ENCODE measurements at regions of chr2 and their contacts with region 1.

Region 1: DNA sequence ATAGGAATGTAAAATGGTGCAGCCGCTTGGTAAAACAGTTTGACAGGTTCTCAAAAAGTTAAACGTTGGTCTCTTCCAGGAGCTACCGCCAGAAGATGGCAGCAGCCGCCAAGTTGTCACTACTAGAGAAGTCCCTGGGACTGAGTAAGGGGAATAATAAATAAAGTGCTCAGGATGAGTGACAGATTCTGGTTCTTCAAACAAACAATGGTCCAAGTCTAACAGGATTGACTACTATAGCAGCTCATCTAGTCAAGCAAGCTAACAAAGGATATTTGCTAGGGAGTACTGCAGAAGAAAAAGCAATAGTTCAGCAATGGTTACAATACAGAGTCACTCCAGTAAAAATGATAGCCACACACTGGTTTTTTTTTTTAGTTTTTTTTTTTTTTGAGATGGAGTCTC is 3.8 kb upstream of the ANAPC1 start:
- DNase-seq: peak; percentile 59
- CTCF ChIP-seq: peak; percentile 64

Region 2: DNA sequence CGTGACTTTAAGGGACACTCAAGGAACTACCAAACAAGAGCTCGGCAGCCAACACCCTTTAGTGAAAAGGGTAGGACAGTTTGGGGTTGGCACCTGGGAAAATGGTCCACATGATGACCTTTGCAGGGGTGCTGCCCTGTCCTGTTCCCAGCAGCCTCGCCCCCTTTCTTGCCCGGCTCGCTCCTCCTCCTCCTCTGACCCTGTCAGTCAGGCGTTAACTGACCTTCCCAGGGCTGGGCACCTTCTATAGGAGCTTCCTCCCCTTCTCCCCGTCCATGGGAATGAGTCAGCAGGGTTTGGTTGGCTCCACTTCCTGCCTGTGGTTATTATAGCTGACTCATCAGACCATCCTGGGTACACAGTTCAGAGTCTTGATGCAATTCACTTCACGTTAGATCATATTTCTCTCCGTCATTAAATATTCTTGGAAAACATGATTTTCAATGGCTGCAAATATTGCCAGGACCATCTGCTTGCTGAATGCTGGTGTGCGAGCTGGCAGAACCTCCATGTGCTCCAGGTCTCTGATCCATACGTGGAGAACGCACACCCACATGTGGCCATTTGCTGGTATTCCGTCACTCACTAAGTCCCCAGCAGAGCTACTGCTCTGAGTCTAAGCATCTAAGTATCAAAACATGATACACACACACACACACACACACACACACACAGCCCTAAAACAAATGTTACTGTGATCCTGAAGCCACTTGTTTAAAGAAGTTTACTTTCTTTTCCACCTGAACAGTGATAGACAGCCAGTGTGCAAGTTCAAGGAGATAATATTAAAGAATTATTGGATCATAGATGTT is 188.9 kb before region 1 on chr2:
- CTCF ChIA-PET with region 1: no interaction called
- POLR2A ChIA-PET with region 1: no interaction called
- DNase-seq: no peak
- CTCF ChIP-seq: peak; percentile 14

Region 3: DNA sequence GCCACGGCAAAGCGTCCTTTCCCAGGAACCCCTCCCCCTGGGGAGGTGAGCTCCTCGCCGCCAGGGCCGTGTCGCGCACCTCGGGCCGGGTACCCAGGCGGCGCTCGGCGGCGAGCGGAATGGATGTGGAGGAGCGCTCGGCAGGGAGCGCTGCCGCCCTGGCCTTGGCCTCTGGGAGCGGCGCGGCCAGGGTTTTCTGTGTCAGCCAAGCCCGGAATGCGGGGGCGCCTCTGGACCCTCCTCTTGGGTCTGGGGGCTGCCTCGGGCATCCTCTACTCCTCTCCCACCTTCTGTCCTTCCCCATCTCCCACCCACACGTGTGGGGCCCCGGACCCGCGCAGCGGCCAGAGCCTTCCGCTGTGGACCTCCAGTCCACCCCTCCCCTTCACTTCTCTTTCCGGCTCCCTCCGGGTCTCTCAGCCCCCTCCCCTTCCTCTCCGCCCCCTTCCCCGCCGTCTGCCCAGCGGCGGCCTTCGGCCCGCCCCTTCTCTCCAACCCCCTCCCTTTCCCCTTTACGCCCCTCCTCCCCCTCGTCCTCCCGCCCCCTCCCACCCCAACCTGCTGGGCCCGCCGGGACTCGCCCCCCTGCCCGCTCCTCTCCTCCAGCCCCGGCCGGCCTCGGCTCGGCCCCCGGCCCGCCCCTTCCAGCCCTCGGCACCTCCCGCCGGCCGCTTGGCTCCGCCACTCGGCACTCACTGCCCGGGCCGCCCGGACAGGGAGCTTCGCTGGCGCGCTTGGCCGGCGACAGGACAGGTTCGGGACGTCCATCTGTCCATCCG is 10.3 kb after region 1 on chr2 and contains the start of gene MERTK:
- CTCF ChIA-PET with region 1: interaction called, 19 read pairs
- POLR2A ChIA-PET with region 1: no interaction called
- DNase-seq: peak; percentile 80
- CTCF ChIP-seq: peak; percentile 53

Region 4: GRCh38 chr2:112048887-112049286 is 161.1 kb after region 1 on chr2:
- CTCF ChIA-PET with region 1: interaction called, 28 read pairs
- POLR2A ChIA-PET with region 1: no interaction called
- DNase-seq: peak; percentile 26
- CTCF ChIP-seq: peak; percentile 72

Region 5: DNA sequence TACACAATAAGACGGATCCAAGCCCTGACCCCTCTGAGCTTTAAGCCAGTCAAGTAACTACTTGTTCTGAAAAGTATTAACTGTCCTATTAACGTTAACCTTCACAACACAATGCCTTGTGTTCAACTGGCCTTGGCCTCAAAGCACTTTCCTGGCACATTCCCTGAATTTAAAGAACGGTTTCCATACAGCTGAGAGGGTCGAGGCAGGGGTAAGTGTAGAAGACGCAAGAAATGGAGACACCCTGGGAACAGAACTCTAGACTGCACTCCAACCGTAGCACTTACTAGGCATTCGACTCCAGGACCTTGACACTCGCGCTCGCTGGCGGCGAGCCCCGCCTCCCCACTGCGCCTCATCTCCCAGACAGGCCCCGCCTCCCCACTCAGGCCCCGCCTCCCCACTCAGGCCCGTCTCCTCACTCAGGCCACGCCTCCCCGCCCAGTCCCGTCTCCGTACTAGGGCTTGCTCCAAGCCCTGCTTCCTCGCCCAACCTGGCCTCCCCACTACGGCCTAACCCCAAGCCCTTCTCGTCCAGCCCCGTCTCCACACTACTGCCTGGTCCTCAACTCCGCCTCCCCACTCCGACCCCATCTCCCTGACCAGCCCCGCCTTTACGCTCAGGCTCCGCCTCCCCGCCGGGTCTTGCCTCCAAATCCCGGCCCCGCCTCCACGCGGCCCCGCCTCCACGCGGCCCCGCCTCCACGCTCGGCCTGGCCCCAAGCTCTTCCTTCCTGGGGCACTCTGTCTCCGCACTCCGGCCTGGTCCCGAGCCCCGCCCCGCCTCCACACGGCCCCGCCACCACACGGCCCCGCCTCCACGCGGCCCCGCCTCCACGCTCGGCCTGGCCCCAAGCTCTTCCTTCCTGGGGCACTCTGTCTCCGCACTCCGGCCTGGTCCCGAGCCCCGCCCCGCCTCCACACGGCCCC is 166.4 kb after region 1 on chr2:
- CTCF ChIA-PET with region 1: interaction called, 28 read pairs
- POLR2A ChIA-PET with region 1: no interaction called
- DNase-seq: peak; percentile 91
- CTCF ChIP-seq: no peak

Region 6: DNA sequence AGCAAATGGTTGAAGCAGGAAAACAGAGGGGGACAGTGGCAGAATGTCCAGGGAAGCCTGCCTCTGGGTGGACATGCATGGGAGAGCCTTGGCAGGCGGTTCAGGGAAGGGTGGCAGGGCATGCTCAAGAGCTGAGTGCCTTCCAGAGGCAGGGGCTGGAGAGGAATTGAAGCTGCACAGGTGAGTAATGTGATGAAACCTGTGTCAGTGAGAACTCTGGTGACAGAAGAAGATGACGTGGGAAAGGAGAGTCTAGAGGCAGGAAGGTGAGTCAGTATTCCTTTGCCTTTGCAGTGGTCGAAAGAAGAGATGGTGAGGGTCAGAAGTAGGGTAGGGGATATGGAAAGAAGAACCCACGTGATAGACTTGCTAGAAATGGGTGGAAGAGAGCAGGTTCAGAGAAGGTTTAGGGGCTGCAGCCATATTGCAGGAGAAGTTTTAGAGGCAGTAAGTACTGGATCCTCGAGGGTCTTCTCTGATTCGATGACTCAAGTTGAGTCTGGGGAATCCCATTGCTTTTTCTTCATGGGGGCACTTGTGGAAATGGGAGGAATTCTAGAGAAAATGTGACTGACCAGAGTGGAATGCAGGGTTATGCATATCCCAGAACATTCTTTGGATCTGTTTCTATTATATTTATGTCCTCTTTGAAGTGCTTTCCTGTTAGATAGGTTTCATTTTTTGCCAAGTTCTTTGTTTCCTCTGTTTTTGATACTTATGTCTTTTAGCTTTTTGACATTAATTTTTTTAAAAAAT is 204.6 kb after region 1 on chr2:
- CTCF ChIA-PET with region 1: no interaction called
- POLR2A ChIA-PET with region 1: no interaction called
- DNase-seq: no peak
- CTCF ChIP-seq: no peak

Measured in GM10248 (cell line).